ENCODE measurements at regions of chr11 and their contacts with region 1.

Region 1: GRCh38 chr11:116787786-116788486 is at the start of gene ZPR1:
- DNase-seq: peak; percentile 68 to 69
- ATAC-seq: peak; percentile 85 to 88
- H3K4me3 ChIP-seq: peak within 1 kb of the TSS; percentile 78 to 98 (median 96)
- H3K27ac ChIP-seq: peak within 1 kb of the TSS; percentile 83 to 89 (median 88)
- H3K4me1 ChIP-seq: peaks cover 17 to 18% of the 10 kb centered on the region in 2 donors
- H3K27me3 ChIP-seq: no peaks in the 10 kb centered on the region
- CTCF ChIP-seq: peak in 1 of 5 experiments; percentile 9
- POLR2A ChIP-seq: peak; percentile 61 to 77
- total RNA-seq, gene ZPR1: 43.3 to 82.5 (median 56.9) TPM

Region 2: DNA sequence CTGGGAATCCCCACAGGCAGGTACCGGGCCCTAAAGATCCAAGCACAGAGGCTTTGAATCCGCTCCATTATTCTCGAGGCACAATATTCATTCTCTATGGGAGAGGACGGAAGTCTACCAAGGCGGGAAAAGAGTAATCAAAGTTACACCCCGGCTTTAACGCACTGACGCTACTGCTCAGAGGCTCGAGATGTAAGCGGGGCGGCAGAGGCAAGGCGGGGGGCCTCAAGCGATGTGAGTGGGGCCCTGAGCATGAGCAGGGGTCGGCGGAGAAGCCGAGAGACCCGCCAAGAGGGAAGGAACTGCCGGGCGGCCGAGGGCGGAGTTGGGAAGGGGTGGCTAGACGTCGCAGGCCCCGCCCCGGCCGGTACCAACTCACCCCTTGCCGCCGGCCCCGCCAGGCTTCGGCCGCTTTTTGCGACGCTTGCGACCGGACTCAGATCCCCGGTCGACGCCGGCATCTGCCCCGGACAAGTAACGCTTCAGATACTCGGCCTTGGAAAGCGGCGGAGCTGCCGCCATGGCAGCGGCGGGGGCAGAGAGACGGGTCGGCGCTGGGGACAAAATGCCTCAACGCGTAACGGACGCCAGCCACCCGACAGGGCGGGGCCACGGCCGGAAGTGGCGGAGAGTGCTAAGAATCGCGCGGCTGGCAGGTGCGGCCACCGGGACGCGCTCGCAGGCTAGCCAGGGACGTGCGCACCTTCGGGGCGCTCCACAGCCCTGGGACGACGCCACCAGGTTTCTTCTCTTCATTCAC is 15.3 kb before region 1 on chr11 and contains the start of gene BUD13:
- in situ Hi-C with region 1: no loop called
- intact Hi-C with region 1: loop called (anchors 2 kb)
- DNase-seq: peak; percentile 80 to 84
- ATAC-seq: peak; percentile 90 to 95
- H3K4me3 ChIP-seq: peak within 1 kb of the TSS; percentile 71 to 98 (median 89)
- H3K27ac ChIP-seq: peak within 1 kb of the TSS; percentile 91 to 96 (median 95)
- H3K4me1 ChIP-seq: peaks cover 21 to 24% of the 10 kb centered on the region in 2 donors
- H3K27me3 ChIP-seq: no peaks in the 10 kb centered on the region
- CTCF ChIP-seq: no peak
- POLR2A ChIP-seq: peak; percentile 36 to 68
- total RNA-seq, gene BUD13: 9.0 to 14.1 (median 12.3) TPM

Region 3: GRCh38 chr11:116835791-116836631 is 48.1 kb after region 1 on chr11:
- in situ Hi-C with region 1: no loop called
- intact Hi-C with region 1: loop called (anchors 1 kb)
- DNase-seq: peak; percentile 65 to 87
- ATAC-seq: peak; percentile 78 to 82
- H3K4me3 ChIP-seq: peak overlapping the region; percentile 43 to 55 (median 44)
- H3K27ac ChIP-seq: peak overlapping the region; percentile 63 to 70 (median 66)
- H3K4me1 ChIP-seq: peaks cover 10 to 14% of the 10 kb centered on the region in 2 donors
- H3K27me3 ChIP-seq: no peaks in the 10 kb centered on the region
- CTCF ChIP-seq: peak; percentile 34 to 70 (median 63)
- POLR2A ChIP-seq: no peak

Region 4: DNA sequence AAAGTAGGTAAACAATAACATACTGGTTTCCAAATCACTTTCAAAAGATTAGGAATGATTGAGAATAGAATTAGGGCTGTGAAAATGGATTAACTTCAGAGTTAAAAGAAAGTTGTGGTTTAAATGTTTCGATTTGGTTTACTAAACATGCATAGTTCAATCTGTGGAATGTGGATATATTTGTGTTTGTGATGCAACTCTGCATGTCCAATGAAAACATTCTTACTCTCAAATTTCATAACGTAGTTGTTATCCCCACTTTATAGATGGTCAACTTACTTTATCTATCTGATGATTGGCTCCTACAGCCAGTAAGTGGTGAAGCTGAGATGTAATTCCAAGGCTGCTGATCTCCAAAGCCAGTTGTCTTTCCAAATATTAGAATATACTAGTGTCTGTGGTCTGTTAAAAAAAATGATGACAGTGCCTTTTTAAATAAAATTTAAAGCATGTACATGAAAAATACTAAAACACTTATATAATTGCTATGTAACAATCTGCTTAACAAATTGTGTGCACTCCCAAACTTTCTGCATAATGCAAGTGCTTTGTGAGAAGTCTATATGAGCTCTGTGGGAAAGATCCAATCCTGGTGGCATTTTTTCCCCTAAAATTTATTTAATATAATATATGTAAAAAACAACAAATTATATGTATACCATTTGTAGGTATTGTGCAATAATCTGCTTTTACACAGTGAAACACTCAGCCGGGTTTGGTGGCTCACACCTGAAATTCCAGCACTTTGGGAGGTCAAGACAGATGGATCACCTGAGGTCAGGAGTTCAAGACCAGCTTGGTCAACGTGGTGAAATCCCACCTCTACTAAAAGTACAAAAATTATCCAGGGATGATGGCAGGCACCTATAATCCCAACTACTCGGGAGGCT is 320.0 kb after region 1 on chr11:
- in situ Hi-C with region 1: loop called (anchors 5 to 10 kb)
- intact Hi-C with region 1: loop called (anchors 1 kb)
- DNase-seq: no peak
- ATAC-seq: no peak
- H3K4me3 ChIP-seq: no peak overlapping the region
- H3K27ac ChIP-seq: no peak overlapping the region
- H3K4me1 ChIP-seq: no peaks in the 10 kb centered on the region
- H3K27me3 ChIP-seq: no peaks in the 10 kb centered on the region
- CTCF ChIP-seq: no peak
- POLR2A ChIP-seq: no peak

Region 5: DNA sequence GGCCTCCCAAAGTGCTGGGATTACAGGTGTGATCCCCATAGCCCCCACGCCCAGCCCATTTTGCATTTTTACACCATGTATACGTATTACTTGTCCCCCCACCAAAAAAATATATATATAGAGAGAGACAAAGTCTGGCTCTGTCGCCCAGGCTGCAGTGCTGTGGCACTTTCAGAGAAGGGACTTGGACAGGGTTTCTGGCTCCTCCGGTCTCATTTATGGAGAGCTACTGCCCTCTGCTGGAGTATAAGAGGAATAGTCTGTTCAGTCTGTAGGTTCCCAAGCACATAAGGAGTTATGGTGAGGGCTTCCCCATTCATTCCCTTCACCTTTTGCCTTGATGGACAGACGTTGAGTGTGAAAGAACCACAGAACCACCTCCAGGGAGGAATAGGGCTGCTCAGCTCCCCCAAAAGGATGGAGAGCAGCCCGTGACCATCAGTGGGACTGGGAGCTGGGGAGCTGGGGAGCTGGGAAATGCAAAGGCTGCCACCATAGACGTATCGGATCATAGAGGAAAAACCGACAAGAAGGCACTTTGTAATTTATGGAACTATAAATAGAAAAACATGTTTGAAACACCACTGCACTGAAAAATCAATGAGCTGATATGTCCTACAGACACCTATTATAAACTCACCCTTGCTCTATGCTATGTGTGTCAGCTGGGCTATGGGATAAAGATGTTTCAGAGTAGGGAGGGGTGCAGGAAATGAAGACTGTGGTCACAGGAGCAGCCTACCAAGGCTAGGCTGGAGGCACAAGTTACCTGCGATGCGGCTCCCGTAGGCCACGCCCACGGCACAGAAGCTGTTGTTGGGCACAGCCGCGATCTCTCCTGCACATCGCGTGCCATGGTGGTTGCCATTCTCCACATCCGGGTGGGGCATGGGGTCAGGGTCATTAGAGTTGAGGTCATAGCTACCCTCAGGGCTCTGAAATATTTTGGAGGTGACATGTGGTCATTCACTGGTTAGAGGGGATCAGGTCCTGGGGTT is 438.8 kb after region 1 on chr11:
- in situ Hi-C with region 1: loop called in 1 of 4 experiments (anchors 10 kb)
- intact Hi-C with region 1: loop called (anchors 2 kb)
- DNase-seq: peak; percentile 32 to 67
- ATAC-seq: peak; percentile 78 to 80
- H3K4me3 ChIP-seq: no peak overlapping the region
- H3K27ac ChIP-seq: no peak overlapping the region
- H3K4me1 ChIP-seq: peaks cover 25 to 36% of the 10 kb centered on the region in 2 donors
- H3K27me3 ChIP-seq: no peaks in the 10 kb centered on the region
- CTCF ChIP-seq: peak; percentile 78 to 85 (median 82)
- POLR2A ChIP-seq: no peak

Region 6: DNA sequence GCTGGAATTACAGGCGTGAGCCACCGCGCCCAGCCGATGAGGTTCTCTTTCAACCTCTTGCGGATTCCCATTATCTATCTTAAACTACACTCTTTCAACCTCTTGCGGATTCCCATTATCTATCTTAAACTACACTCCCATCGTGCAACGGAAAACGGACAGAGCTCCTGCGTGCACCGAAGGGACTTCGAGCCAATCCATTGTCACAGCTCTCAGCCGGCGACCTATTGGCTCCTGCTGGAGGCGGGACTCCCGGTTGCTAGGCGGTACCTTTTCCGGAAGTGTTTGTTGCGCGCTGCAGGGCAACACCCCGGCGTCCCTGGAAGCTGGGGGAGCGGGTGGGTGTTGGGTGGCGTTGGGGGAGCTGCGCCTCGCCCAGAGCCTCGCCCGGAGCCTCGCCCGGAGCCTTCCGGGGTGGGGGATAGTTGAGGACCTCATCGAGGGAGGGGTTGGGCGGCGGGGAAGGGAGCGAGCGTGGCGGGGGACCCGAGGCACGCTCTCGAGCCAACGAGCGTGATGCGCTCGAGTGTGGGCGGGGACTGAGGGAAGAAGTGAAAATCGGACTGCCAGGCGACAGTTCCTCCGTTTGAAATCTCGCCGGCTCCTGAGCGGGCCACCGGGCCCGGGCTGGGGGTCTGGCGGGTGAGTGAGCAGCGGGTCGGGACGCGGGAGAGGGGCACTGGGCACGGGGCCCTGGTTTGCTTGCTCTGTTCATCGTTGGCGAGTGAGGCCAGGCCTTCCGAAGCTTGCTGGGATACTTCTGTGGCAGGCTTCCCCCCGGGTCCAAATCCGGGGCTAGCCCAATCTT is 539.8 kb after region 1 on chr11 and contains the start of gene CEP164:
- in situ Hi-C with region 1: no loop called
- intact Hi-C with region 1: loop called (anchors 5 kb)
- DNase-seq: peak; percentile 94 to 95
- ATAC-seq: peak; percentile 98 to 99
- H3K4me3 ChIP-seq: peak within 1 kb of the TSS; percentile 66 to 90 (median 77)
- H3K27ac ChIP-seq: peak within 1 kb of the TSS; percentile 85 to 91 (median 86)
- H3K4me1 ChIP-seq: peaks cover 9% of the 10 kb centered on the region in 2 donors
- H3K27me3 ChIP-seq: no peaks in the 10 kb centered on the region
- CTCF ChIP-seq: no peak
- POLR2A ChIP-seq: peak; percentile 42 to 63
- total RNA-seq, gene CEP164: 3.4 to 9.2 (median 5.8) TPM